MCF 10A (cell line): ENCODE measurements at regions of chr15 and their contacts with region 1.

Region 1: DNA sequence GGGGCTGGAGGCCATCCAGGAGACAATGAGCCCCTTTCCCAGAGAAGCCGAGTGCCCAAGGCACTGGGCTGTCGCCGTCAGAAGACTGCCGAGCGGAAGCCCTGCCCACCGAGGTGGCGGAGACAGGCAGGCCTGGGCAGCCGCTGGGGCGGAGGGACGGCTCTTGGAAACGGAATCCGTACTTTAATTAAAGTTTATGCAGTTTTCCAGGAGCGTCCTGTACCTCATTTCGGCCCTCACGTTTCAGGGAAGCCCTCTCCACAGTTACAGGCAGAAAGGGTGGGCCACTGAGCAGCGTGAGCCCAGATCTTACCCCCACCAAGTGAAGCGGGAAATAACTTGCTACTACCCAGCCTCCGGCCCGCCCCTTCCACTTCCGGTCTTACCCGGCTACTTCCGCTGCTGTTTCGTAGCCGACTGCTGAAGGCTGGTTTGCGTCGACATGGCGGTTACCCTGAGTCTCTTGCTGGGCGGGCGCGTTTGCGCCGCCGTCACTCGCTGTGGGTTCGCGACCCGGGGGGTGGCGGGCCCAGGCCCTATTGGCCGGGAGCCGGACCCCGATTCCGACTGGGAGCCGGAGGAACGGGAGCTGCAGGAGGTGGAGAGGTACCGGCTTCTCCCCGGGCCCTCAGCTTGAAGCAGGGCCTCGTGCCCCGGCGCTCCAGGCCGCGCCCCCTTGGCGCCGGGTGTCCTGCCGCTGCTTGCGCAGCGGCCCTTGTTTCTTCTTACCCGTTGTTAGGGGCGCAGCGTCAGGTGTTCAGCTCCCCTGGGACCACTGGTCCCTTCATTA is at the start of gene NGRN:
- DNase-seq: peak; percentile 90
- H3K4me3 Mint-ChIP-seq: peak within 1 kb of the TSS; percentile 97
- H3K27ac Mint-ChIP-seq: peak within 1 kb of the TSS; percentile 96
- H3K4me1 Mint-ChIP-seq: peaks cover 38% of the 10 kb centered on the region
- H3K27me3 Mint-ChIP-seq: no peaks in the 10 kb centered on the region
- CTCF ChIP-seq: no peak
- total RNA-seq, gene NGRN: 70.5 and 77.0 TPM in 2 replicates

Region 2: DNA sequence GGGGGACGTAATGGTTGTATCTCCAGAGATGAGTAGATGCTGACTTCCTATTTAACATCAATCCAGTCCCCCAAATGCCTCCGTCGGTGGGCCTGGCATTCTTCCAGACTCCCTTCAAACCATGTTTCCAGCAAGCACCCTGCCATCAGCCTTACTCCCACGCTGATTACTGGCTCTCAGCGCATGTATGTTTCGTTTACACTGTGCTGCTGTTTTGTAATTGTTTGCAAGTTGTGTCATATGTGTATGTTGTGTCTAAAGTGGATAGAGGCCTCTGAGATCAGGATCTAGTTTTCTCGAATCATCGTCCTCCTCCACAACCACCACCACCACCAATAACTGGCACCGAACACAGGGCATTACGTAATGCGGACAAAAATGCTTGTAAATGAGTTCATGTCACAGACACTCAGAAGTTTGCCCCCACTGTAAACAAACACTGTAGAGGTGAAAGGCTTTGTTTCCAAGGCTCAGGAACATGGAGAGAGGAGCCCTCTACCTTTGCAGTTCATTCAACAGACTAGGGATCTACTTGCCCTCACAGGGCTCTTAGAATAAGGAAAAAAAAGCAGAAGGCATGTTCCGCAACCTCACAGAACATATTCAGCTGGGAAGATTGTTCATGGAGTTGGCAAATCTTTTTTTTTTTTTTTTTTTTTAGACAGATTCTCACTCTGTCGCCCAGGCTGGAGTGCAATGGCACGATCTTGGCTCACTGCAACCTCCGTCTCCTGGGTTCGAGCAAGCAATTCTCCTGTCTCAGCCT is 110.4 kb before region 1 on chr15:
- CTCF ChIA-PET with region 1: no interaction called
- POLR2A ChIA-PET with region 1: no interaction called
- intact Hi-C with region 1: no loop called
- DNase-seq: peak; percentile 69
- H3K4me3 Mint-ChIP-seq: no peak overlapping the region
- H3K27ac Mint-ChIP-seq: no peak overlapping the region
- H3K4me1 Mint-ChIP-seq: peaks cover 22% of the 10 kb centered on the region
- H3K27me3 Mint-ChIP-seq: no peaks in the 10 kb centered on the region
- CTCF ChIP-seq: no peak

Region 3: DNA sequence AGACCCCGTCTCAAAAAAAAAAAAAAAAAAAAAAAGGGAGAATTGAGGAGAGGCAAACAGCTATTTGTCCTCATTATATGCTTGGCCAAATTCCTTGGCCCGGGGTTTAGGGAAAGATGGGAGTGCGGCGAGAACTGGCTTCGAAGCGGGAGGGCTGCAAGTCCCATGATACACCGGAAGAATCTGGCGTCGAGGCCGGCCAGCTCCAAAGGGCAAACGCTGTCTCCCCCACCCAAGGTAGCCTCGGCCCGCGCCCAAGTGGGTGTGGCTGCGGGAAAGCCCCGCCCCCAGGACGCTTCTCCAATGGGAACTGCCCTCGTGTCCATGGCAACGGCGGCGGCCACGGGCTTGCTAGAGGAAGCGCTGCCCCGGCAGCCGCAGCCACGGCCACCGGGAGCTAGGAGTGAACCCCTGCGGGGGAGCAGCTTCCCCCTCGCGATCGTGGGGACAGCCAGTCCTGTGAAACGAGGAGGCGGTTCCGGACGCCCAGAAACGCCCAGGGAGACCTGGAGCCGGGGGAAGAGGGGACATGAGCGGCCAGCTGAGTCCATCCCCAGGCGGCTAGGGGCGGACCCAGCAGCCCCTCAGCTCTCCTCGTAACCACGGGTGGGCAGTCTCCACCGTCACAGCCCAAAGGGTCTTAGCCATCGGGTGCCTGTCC is 16.1 kb before region 1 on chr15 and contains the start of gene TTLL13:
- CTCF ChIA-PET with region 1: interaction called, 15 read pairs
- POLR2A ChIA-PET with region 1: interaction called, 33 read pairs
- intact Hi-C with region 1: no loop called
- DNase-seq: peak; percentile 89
- H3K4me3 Mint-ChIP-seq: peak within 1 kb of the TSS; percentile 74
- H3K27ac Mint-ChIP-seq: no peak within 1 kb of the TSS
- H3K4me1 Mint-ChIP-seq: no peaks in the 10 kb centered on the region
- H3K27me3 Mint-ChIP-seq: no peaks in the 10 kb centered on the region
- CTCF ChIP-seq: no peak
- total RNA-seq, gene TTLL13: 0.47 TPM in 1 of 2 replicates, not detected in the other